RWPE1 (cell line): ENCODE measurements at regions of chr10 and their contacts with region 1.

Region 1: DNA sequence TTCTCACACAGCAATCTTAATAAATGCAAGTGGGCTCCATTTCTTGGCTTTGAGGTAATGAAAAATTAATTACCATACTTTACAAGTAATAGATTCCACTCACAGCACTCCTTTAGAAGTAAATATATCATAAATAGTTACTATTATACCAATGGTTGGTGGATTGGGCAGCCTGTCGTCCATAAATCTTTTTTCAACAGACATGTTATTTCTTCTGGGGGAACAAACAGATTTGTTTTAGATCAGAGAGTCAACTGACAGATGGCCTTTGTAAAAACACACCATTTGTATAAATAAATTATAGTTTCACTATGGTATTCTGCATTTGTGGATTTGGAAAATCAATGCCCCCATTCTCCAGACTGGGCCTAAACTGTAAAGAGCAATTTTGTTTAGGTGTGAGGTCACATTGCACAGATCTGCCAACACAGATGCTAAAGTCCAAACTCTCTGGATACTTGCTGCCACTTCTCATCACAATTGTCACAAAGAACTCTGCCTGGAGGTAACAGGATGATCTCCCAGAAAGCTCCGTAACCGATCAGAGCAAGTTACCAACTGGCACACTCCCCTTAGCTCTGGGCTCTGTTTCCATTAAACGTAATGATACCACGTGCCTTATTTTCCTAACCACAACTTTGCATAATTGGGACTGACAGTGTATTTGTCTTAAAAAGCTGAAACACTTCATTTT is 4.5 kb upstream of the MACROH2A2 start:
- DNase-seq: no peak
- H3K27ac ChIP-seq: no peak overlapping the region
- CTCF ChIP-seq: no peak

Region 2: DNA sequence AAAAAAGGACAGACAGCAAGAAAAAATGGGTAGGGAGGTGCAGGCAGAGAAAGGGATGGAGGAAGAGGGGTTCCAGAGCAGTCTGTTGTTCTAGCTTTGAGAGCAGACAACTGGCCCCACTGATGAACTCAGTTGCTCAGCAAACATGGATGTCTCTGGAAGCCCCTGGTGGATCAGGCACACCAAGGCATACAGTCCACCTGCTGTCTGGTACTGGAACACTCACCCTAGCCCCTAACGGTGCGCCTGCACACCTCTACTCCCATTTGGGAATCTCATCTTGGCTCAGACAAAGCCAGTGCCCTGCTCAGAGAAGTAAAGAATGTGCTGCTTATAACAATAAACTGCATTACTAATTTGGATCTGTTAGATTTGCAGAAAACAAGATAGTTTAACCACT is 12.2 kb after region 1 on chr10:
- CTCF ChIA-PET with region 1: no interaction called
- POLR2A ChIA-PET with region 1: no interaction called
- DNase-seq: no peak
- H3K27ac ChIP-seq: no peak overlapping the region
- CTCF ChIP-seq: no peak

Region 3: DNA sequence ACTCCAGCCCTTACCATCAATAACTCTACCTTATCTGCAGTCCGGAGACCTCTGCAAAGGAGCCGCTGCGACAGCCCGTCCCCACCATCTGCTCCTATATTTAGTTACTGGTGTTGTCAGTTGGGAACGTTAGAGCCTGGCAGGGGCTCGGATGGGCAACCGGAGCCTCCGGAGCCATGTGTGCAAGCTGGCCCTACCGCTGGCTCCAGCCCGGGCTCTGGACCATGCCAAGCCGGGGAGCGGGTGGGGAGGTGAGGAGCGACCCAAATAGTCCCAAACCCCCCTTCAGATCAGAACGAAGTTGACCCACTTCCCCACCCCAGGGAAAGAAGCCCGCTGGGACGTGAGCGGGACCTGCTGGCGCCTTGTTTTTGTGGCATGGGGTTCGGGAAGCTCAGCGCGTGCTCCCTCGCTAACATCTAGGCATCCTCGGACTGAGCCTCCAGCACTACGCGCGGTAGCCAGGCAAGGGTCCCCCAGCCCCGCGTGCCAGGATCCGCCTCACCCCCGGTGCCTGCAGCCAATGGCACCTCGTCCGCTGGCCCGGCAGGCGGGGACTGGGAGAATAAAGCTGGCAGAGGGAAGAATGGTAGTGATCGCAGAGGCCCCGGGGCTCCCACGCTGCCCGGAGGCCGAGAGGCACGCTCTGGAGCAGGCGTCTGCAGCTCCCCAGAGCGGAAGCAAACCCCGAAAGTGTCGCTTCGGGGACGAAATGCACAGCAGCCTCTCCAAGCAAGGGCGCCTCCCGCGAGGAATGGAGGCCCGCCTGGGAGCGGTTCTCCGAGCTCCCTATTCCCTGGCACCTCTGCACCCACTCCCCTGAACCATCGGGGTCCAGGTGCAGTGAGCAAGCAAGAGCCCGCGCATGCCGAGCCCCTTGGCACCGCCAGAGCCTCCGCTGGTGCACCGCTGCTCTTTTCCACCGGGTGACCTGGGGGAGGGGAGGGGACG is 333.6 kb after region 1 on chr10:
- CTCF ChIA-PET with region 1: no interaction called
- POLR2A ChIA-PET with region 1: interaction called, 14 read pairs
- DNase-seq: peak; percentile 48
- H3K27ac ChIP-seq: peak overlapping the region; percentile 82
- CTCF ChIP-seq: no peak